Activated T-helper 2 cell treated with anti-CD3 and anti-CD28 coated beads, Interferon-gamma antibody, Interleukin-2, Interleukin-4, amounts not matched to agents 10 μg/mL and 5 μg/mL and 100 μg/mL, durations not matched to agents 14 hours and 24 hours and 36 hours (primary cell): ENCODE measurements at regions of chr17 and their contacts with region 1.

Region 1: GRCh38 chr17:50397111-50397918 is at the start of gene LRRC59:
- DNase-seq: peak; percentile 92
- H3K4me3 Mint-ChIP-seq: peak within 1 kb of the TSS; percentile 99
- H3K27ac Mint-ChIP-seq: peak within 1 kb of the TSS; percentile 97
- H3K4me1 Mint-ChIP-seq: peaks cover 24% of the 10 kb centered on the region
- H3K27me3 Mint-ChIP-seq: no peaks in the 10 kb centered on the region
- total RNA-seq, gene LRRC59: 118 and 119 TPM in 2 replicates

Region 2: GRCh38 chr17:50337987-50338386 is 59.3 kb before region 1 on chr17:
- intact Hi-C with region 1: no loop called
- DNase-seq: no peak
- H3K4me3 Mint-ChIP-seq: no peak overlapping the region
- H3K27ac Mint-ChIP-seq: no peak overlapping the region
- H3K4me1 Mint-ChIP-seq: peaks cover 14% of the 10 kb centered on the region
- H3K27me3 Mint-ChIP-seq: no peaks in the 10 kb centered on the region

Region 3: DNA sequence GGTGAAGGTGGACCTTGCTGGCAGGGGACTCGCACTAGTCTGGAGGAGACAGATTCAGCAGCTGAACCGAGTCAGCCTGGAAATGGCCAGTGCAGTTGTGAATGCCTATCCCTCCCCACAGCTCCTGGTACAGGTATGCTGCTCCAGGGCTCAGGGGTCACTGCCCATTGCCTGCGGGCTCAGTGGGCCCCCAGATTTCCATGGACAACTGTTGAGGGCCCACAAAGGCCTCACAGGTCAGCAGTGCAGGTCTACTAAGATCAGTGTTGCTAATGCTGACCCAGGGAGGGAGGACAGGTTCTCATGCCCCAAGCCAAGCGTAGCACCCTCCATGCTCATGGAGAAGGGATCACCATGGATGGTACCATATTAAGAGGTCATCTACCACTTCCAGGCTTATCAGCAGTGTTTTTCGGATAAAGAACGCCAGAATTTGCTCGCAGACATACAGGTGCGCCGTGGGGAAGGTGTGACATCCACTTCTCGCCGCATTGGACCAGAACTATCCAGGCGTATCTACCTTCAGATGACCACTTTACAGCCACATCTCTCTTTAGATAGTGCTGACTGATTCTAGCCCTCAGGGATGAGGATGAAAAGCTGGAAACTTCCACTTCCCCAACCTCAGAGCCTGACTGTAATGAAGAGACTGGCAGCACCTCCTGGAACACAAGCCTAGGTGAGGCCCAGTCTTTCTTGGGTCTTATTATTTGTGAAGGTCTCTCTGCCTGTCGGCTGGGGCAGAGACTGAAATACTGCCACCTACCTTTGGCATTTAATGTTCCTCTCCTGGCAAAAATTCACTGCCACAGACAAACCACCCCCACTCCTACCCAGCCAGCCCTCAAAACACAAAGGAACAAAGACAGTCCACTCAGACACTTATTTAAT is 16.7 kb before region 1 on chr17:
- intact Hi-C with region 1: loop called (anchors 2 kb)
- DNase-seq: no peak
- H3K4me3 Mint-ChIP-seq: no peak overlapping the region
- H3K27ac Mint-ChIP-seq: no peak overlapping the region
- H3K4me1 Mint-ChIP-seq: peaks cover 1% of the 10 kb centered on the region
- H3K27me3 Mint-ChIP-seq: no peaks in the 10 kb centered on the region

Region 4: DNA sequence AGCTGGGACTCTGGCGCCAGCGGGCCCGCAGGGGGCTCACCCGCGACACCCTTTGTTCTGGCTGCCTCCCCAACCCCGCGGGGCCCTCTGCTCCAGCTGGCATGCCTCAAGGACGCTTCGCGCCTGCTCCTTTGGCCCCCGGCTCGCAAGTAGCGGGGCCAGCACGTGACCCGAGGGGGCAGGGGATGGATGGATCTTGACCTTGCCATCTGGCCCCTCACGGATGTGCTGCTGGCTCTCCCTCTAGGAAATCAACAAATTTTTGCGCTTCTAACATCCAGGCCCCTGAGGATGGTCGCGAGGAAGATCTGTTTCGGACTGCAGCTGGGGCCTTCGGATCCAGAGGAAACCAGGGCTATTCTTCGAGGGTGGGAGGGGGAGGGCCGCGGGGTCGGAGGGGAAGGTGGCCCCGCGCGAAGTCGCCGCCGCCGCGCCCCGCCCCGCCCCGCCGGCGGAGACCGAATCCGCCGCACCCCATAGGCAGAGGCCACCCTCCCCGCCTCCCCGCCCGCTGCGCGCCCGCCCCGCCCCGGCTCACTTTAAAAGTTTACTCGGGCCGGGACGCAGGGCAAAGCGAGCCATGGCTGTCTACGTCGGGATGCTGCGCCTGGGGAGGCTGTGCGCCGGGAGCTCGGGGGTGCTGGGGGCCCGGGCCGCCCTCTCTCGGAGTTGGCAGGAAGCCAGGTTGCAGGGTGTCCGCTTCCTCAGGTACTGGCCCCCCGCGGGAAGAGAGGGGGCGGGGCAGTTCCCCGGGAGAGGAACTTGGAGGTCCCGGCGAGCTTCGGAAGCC is 28.6 kb after region 1 on chr17 and contains the start of gene ACSF2:
- intact Hi-C with region 1: loop called (anchors 1 kb)
- DNase-seq: peak; percentile 64
- H3K4me3 Mint-ChIP-seq: peak within 1 kb of the TSS; percentile 89
- H3K27ac Mint-ChIP-seq: peak within 1 kb of the TSS; percentile 81
- H3K4me1 Mint-ChIP-seq: peaks cover 30% of the 10 kb centered on the region
- H3K27me3 Mint-ChIP-seq: no peaks in the 10 kb centered on the region
- total RNA-seq, gene ACSF2: 23.5 and 28.2 TPM in 2 replicates